ENCODE measurements at regions of chr9 and their contacts with region 1.

Region 1: GRCh38 chr9:92969516-92970466 is 22.5 kb downstream of the FGD3 start:
- DNase-seq: no peak
- H3K4me3 Mint-ChIP-seq: peak overlapping the region; percentile 99
- H3K27ac Mint-ChIP-seq: peak overlapping the region; percentile 100
- H3K4me1 Mint-ChIP-seq: peaks cover 78% of the 10 kb centered on the region
- H3K27me3 Mint-ChIP-seq: no peaks in the 10 kb centered on the region

Region 2: DNA sequence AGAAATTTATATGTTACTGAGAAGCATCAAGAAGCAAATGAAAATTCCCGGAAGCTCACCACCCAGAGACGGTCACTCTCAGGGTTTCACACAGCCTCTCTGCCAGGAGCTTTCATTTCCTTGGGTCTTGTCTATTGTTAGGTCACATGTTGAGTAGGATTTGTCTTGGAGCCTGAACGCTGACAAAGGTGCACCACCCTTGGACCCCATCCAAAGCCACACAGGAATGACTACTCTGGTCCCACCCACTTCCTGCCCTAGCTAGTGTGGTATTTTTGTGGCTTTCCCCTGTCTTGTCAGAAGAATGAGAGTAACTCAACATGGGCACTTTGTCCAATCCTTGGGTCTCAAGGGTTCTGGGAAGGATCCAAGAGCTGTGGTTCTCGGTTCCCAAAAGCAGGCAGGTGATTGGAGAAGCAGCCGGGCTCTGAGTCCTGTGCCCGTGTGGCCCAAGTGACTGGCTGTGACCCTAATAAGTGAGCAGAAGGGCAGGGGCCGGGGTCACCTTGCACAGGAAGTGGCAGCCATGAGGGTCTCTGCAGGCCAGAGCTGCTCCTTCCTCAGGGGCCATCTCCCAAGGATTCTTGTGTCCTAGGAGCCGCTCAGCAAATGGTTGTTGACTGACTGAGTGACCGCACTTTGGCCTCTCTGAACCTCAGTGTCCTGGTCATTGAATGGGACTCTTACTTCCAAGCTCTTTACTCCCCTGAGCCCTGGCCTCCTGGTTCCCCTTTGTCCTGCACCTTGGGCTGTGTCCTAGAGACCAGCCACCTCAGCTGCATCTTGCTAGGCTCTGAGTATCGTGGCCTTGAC is 15.5 kb before region 1 on chr9:
- CTCF ChIA-PET with region 1: interaction called, 12 read pairs
- intact Hi-C with region 1: loop called (anchors 1 kb)
- DNase-seq: peak; percentile 95
- H3K4me3 Mint-ChIP-seq: peak overlapping the region; percentile 60
- H3K27ac Mint-ChIP-seq: peak overlapping the region; percentile 91
- H3K4me1 Mint-ChIP-seq: peaks cover 75% of the 10 kb centered on the region
- H3K27me3 Mint-ChIP-seq: no peaks in the 10 kb centered on the region

Region 3: DNA sequence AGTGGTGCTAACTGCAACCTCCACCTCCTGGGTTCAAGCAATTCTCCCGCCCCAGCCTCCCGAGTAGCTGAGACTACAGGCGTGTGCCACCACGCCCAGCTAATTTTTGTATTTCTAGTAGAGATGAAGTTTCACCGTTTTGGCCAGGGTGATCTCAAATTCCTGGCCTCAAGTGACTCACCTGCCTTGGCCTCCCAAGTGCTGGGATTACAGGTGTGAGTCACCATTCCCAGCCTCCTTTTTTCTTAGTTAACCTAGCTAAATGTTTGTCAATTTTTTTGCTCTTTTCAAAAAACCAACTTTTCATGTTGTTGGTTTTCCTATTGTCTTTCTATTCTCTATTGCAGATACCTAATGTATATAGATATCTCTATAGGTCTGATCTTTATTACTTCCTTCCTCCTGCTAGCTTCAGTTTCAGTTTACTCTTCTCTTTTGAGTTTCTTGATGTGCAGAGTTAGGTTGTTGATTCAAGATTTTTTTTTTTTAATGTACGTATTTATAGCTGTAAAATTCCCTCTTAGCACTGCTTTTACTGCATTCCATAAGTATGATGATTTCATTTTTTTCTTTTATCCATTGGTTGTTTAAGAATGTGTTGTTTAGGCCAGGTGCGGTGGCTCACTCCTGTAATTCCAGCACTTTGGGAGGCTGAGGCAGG is 10.4 kb after region 1 on chr9:
- CTCF ChIA-PET with region 1: no interaction called
- intact Hi-C with region 1: loop called (anchors 1 kb)
- DNase-seq: no peak
- H3K4me3 Mint-ChIP-seq: peak overlapping the region; percentile 45
- H3K27ac Mint-ChIP-seq: peak overlapping the region; percentile 90
- H3K4me1 Mint-ChIP-seq: peaks cover 66% of the 10 kb centered on the region
- H3K27me3 Mint-ChIP-seq: no peaks in the 10 kb centered on the region

Region 4: GRCh38 chr9:92986176-92987085 is 16.6 kb after region 1 on chr9:
- CTCF ChIA-PET with region 1: interaction called, 4 read pairs
- intact Hi-C with region 1: loop called (anchors 1 kb)
- DNase-seq: peak; percentile 84
- H3K4me3 Mint-ChIP-seq: no peak overlapping the region
- H3K27ac Mint-ChIP-seq: peak overlapping the region; percentile 92
- H3K4me1 Mint-ChIP-seq: peaks cover 73% of the 10 kb centered on the region
- H3K27me3 Mint-ChIP-seq: no peaks in the 10 kb centered on the region

Region 5: GRCh38 chr9:93134015-93134739 is 164.4 kb after region 1 on chr9 and contains the start of gene NINJ1:
- CTCF ChIA-PET with region 1: no interaction called
- intact Hi-C with region 1: loop called (anchors 1 kb)
- DNase-seq: peak; percentile 96
- H3K4me3 Mint-ChIP-seq: peak within 1 kb of the TSS; percentile 94
- H3K27ac Mint-ChIP-seq: peak within 1 kb of the TSS; percentile 91
- H3K4me1 Mint-ChIP-seq: peaks cover 67% of the 10 kb centered on the region
- H3K27me3 Mint-ChIP-seq: no peaks in the 10 kb centered on the region
- total RNA-seq, gene NINJ1: 93.9 to 96.9 TPM

Measured in activated naive CD4-positive, alpha-beta T cell treated with anti-CD3 and anti-CD28 coated beads for 36 hours (primary cell).